Mucosa of descending colon (tissue), 3 donors: ENCODE measurements at regions of chr1 and their contacts with region 1.

Region 1: DNA sequence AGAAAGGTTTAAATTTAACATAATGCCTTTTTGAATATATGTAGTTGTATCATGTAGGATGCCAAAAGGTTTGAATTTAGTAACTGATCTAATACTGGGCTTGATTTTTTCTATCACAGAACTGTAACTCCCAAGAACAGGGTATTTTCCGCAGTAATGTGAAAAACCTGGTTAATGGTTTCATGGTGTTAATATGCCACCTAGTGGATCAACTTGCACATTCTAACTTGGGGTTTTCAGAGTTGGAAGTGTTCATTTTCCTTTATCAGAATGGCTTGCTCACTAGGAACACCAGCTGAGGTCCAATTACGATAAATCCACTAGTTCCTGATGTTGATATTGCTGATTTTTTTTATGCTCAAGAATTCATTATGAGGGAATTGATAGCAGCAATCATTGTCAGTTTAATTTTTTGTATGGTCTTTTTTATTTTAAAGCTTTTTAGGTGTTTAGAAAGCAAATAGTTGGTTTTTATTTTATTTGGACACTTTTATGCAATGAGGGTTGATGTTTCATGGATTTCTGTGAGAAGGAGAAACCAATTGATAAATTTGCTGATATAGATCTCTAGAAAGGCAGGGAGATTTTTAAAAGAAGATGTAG is 157.2 kb downstream of the PLA2G4A start:
- DNase-seq: peak in 1 of 3 donors; percentile 39
- ATAC-seq: peak; percentile 68
- H3K4me3 ChIP-seq: no peak overlapping the region
- H3K4me1 ChIP-seq: no peaks in the 10 kb centered on the region
- CTCF ChIP-seq: peak; percentile 34

Region 2: GRCh38 chr1:186482661-186483255 is 503.2 kb before region 1 on chr1:
- intact Hi-C with region 1: loop called in 1 of 2 experiments (anchors 10 kb)
- DNase-seq: peak in 1 of 3 donors; percentile 52
- ATAC-seq: peak; percentile 58
- H3K4me3 ChIP-seq: no peak overlapping the region
- H3K4me1 ChIP-seq: no peaks in the 10 kb centered on the region
- CTCF ChIP-seq: peak; percentile 48

Region 3: GRCh38 chr1:186605762-186606350 is 380.1 kb before region 1 on chr1:
- intact Hi-C with region 1: loop called in 1 of 2 experiments (anchors 10 kb)
- DNase-seq: peak in 2 of 3 donors; percentile 37 to 54
- ATAC-seq: peak; percentile 56
- H3K4me3 ChIP-seq: no peak overlapping the region
- H3K4me1 ChIP-seq: no peaks in the 10 kb centered on the region
- CTCF ChIP-seq: no peak

Region 4: DNA sequence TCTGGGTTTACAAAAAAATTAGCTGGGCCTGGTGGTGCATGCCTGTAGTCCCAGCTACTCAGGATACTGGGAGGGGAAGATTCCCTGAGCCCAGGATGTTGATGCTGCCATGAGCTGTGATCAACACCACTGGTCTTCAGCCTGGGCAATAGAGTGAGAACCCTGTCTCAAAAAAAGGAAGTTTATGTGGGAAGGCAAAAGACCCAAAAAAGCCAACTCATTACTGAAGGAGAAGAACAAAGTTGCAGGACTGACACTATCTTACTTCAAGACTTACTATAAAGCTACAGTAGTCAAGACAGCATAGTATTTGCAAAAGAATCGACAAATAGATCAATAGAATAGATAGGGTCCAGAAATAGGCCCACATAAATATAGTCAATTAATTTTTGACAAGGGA is 296.6 kb before region 1 on chr1:
- intact Hi-C with region 1: loop called in 1 of 2 experiments (anchors 5 kb)
- DNase-seq: no peak
- ATAC-seq: no peak
- H3K4me3 ChIP-seq: no peak overlapping the region
- H3K4me1 ChIP-seq: no peaks in the 10 kb centered on the region
- CTCF ChIP-seq: no peak

Region 5: DNA sequence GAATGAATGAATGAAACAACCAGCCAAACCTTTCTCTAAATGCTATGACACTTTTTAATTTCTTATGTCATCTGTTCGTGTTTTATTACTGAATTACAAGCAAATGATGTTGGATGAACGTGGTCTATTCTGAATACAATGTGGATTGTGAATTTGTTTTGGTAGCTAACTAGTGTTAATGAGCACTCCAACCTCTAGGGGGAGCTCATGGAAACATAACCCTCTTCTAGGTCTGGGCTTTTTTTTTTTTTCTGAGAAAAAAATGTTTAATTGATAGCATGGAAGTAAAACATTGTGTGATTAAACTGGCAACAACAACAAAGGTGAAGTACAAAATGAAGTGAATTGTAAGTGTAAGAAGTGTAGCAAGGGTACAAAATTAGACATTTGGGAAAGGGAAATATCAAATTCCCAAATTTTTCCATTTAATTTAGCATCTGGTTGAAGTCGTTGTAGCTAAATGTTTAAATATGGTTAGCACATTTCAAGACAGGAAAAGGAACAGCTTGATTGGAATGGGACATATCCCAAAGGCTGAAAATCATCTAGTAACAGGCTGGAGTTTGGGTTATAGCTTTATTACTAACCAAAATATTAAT is 263.2 kb before region 1 on chr1:
- intact Hi-C with region 1: loop called in 1 of 2 experiments (anchors 10 kb)
- DNase-seq: peak in 1 of 3 donors; percentile 77
- ATAC-seq: no peak
- H3K4me3 ChIP-seq: no peak overlapping the region
- H3K4me1 ChIP-seq: no peaks in the 10 kb centered on the region
- CTCF ChIP-seq: peak; percentile 24